GM10248 (cell line): ENCODE measurements at regions of chr10 and their contacts with region 1.

Region 1: DNA sequence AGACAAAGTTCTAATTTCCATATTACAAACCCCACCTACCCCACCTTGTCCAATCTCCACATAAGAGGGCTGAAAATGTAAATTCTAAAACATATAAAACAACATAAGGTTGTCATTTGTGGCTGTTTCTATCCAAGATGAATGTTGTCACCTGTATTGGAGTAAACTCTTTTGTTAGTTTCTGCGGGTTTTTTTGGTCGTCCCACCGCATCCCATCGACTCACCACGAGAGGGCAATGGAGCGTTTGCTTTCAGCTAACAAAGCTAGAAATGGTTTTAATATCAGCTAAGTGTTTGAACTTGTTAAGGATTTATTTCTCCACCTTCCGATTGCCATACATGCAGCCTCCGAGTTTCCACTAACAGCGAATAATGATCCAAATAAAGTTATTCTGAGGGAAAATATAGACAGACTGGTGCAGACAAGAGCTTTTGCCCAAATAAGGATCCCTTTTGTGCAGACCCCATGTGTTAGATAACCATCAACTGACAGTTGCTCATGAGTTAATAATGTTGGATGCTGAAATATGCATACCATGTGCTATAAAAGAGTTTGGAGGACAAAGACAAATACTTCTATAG is 137.2 kb downstream of the ARID5B start:
- DNase-seq: peak; percentile 63
- CTCF ChIP-seq: peak; percentile 82

Region 2: DNA sequence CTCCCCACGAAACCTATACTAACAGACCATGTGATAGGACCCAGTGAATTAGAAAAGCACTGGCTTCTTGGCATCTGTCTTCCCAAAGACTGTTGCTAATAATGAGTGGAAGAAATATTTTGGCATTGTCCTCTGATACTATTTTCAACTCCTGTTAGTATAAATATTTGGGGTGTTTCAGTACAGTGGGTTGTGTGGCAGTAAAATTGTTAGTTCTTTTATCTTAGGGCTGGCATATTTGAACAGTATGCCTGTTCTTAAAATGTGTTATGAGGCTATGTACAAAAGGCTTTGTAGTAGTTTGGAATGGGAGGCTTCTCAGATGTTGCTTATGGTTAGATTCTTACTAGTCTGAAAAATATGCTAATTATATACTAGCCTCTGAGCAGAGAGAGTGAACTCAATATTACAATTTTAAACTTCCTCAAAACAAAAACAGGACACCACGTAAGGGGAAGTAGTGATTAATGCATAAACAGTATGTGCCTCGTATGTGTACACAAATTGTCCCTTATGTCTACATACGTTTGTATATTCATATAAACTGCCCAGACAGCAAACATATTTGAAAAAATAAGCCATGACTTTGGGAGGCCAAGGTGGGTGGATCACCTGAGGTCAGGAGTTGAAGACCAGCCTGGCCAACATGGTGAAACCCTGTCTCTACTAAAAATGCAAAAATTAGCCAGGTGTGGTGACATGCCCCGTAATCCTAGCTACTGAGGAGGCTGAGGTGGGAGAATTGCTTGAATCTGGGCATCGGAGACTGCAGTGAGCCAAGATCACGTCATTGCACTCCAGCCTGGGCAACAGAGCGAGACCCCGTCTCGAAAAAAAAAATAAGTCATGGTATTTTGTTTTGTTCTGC is 21.8 kb before region 1 on chr10:
- CTCF ChIA-PET with region 1: interaction called, 245 read pairs
- POLR2A ChIA-PET with region 1: no interaction called
- DNase-seq: peak; percentile 20
- CTCF ChIP-seq: no peak

Region 3: GRCh38 chr10:62050893-62051433 is 12.3 kb after region 1 on chr10:
- CTCF ChIA-PET with region 1: interaction called, 61 read pairs
- POLR2A ChIA-PET with region 1: no interaction called
- DNase-seq: peak; percentile 47
- CTCF ChIP-seq: no peak

Region 4: DNA sequence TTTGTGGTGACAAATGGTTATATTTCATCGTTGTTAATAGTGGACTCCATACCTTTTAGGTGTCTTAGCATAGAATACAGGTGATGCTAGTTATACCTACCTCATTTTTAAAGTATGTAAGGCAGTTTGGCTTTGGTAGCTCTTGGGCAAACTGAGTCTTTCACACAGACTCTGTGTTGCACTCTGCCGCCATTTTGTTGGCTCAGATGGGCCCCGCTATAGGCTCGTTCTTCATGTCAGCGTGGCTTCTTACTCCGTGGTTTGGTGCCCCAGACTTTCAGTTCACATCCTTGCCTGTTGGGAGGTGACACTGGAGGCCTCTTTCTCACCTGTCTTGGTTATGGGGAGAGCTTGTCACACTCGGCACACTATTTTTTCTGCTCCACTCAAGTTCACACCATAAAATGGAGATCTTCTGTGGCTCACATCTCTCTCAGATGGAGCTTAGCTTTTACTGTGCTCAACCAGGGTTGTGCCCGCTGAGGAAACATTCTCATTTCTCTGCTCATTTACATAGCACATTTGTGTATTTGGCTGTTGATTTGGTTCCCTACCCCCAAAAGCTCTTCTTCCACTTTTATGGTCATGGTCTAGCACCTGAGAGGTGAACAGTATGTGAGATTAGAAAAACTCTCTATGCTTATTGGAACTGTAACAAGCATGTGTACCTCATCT is 41.3 kb after region 1 on chr10:
- CTCF ChIA-PET with region 1: interaction called, 15 read pairs
- POLR2A ChIA-PET with region 1: no interaction called
- DNase-seq: peak; percentile 41
- CTCF ChIP-seq: no peak